ENCODE measurements at regions of chr15 and their contacts with region 1.

Region 1: DNA sequence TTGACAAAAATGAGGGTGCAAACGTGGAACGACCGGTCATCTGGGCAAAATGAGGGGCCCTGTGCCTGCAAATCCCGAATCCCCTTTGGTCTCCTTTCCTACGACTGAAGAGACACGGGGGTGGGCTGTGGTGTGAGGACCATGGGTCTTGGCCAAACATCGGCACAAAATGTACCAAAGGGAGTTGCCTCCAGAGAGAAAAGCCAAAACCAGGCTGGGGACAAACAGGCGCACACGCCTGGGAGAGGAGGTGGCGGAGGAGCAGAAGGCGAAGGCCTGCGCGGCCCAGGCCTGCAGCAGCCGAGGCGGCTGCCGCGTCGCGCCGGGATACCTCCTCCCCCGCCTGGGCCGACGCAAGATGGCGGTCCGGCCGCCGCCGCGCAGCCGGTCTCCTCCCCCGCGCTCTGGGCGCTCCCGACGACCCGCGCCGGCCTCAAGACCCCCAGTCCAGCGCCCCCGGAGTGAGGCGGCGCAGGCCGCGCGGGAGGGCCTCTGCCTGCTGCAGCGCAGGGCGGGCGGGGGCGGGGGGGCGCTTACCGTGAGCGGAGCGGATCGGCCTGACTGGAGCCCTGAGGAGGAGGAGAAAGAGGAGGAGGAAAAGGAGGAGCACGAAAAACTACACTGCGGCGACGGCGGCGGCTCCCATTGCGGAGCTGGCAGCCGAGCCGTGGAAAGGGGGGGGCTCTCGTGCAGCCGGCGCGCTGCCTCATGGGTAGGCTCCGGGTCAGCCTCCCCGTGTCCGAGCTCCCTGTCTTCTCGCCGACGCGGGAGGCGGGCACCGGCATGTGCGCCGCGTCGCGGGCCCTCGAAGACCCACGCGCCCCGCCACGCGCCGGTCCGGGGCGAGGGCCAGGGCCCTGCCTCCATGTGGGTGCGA is at the start of gene ZNF280D:
- DNase-seq: peak; percentile 94
- H3K4me3 Mint-ChIP-seq: peak within 1 kb of the TSS; percentile 91
- H3K27ac Mint-ChIP-seq: peak within 1 kb of the TSS; percentile 96
- H3K4me1 Mint-ChIP-seq: peaks cover 29% of the 10 kb centered on the region
- H3K27me3 Mint-ChIP-seq: peaks cover 2% of the 10 kb centered on the region
- total RNA-seq, gene ZNF280D: 25.9 and 26.2 TPM in 2 replicates

Region 2: DNA sequence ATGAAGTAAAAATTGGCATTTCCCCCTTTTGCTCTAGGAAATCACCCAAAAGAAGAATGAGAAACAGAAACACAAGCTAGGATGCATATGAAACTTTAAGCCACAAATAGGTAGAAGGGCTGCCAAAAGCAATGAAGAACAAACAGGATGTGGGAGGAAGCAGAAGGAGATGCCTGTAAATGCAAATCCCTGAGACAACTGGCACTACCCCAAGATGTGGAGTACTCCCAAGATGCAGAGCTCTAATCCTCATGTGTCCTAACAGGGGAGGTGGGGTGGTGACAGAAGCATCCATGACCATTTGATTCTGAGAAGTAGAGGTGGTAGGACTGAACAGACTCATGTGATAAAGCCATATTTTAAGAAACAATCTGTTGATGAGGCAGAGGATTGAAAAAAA is 32.1 kb after region 1 on chr15:
- intact Hi-C with region 1: loop called (anchors 2 kb)
- DNase-seq: peak; percentile 74
- H3K4me3 Mint-ChIP-seq: peak overlapping the region; percentile 41
- H3K27ac Mint-ChIP-seq: peak overlapping the region; percentile 93
- H3K4me1 Mint-ChIP-seq: peaks cover 32% of the 10 kb centered on the region
- H3K27me3 Mint-ChIP-seq: no peaks in the 10 kb centered on the region

Measured in activated CD4-positive, alpha-beta T cell treated with anti-CD3 and anti-CD28 coated beads, Interleukin-2, amount 10 ng/mL, durations not matched to agents 24 days and 14 days (primary cell).